ENCODE measurements at regions of chr2 and their contacts with region 1.

Region 1: GRCh38 chr2:214982879-214983278 is 155.5 kb downstream of the ABCA12 start:
- DNase-seq: no peak
- H3K4me3 ChIP-seq: no peak overlapping the region
- H3K27ac ChIP-seq: no peak overlapping the region
- H3K4me1 ChIP-seq: no peaks in the 10 kb centered on the region
- H3K27me3 ChIP-seq: no peaks in the 10 kb centered on the region
- CTCF ChIP-seq: no peak
- POLR2A ChIP-seq: no peak

Region 2: GRCh38 chr2:214946949-214947348 is 35.9 kb before region 1 on chr2:
- intact Hi-C with region 1: loop called (anchors 1 kb)
- DNase-seq: no peak
- H3K4me3 ChIP-seq: no peak overlapping the region
- H3K27ac ChIP-seq: no peak overlapping the region
- H3K4me1 ChIP-seq: no peaks in the 10 kb centered on the region
- H3K27me3 ChIP-seq: no peaks in the 10 kb centered on the region
- CTCF ChIP-seq: no peak
- POLR2A ChIP-seq: no peak